Psoas muscle (tissue), 8 donors: ENCODE measurements at regions of chr10 and their contacts with region 1.

Region 1: DNA sequence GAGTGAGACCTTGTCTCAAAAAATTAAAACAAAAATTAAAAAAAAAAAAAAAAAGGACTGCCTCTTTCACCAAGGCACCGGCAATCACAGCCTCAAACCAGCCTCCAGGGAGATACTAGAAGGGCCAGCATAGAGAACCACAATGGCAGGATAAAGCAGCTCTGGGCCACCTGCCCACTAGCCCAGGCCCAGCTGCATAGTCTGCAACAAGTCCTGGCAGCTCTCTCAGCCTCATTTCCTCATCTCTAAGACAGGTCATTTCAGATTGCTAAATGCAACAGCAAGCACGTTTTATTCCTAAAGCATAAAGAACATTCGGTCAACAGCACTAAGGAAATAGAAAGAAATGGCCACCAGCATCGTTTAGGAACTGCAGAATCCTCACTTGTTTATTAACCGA is 28.8 kb downstream of the XPNPEP1 start:
- DNase-seq: peak; percentile 86 to 92
- ATAC-seq: peak; percentile 90 to 95 (median 92)
- H3K4me3 ChIP-seq: peak overlapping the region; percentile 14
- H3K27ac ChIP-seq: peak overlapping the region; percentile 68
- H3K4me1 ChIP-seq: peaks cover 41% of the 10 kb centered on the region
- H3K27me3 ChIP-seq: no peaks in the 10 kb centered on the region
- CTCF ChIP-seq: no peak

Region 2: GRCh38 chr10:109668154-109668665 is 226.3 kb before region 1 on chr10:
- intact Hi-C with region 1: no loop called
- DNase-seq: no peak
- ATAC-seq: no peak
- H3K4me3 ChIP-seq: no peak overlapping the region
- H3K27ac ChIP-seq: no peak overlapping the region
- H3K4me1 ChIP-seq: no peaks in the 10 kb centered on the region
- H3K27me3 ChIP-seq: no peaks in the 10 kb centered on the region
- CTCF ChIP-seq: no peak

Region 3: DNA sequence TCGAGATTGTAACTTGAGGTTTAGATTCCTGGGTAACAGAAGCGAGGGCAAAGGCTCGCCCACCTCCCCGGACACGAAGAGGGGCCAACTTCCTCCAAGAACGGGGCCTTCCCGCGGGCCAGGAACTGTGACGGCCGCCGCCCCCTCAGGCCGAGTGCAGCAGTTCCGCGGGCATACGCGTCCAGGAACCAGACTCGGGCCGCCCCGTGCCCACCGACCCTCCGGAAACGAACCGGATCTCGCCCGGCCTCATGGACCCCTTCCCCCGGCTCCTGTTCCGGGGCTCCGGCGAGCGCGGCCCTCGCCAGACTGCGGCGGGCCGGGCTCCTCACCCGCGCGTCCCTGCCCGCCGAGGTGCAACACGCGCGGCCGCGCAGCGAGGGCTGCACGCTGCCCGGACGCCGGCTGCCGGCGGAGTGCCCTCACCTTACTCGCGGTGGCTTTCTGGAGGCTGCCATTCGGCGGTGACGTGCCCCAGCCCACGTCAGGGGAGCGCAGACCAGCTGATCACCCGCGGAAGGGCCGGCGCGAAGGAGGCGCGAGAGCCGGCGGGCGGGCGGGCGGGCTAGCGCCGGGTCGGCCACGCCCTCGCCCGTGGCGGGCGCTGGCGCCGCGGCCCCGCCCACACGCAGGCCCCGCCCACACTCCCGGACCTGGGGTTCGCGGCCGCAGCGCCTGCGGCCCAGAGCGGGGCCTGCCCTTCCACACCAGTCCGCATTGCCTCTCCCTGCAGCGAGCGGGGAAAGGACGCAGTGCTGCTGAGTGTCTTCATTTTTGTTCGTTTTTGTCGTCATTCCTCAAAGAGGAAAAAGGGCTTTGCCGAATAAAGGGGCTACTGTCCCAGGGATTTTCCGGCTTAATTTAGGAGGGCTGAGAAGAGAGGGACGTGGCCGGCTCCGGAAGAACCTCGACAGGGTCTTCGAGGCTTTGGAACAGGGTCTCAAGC is 28.7 kb after region 1 on chr10 and contains the start of gene XPNPEP1:
- intact Hi-C with region 1: loop called (anchors 5 kb)
- DNase-seq: peak; percentile 90 to 94
- ATAC-seq: peak; percentile 98 to 99 (median 98)
- H3K4me3 ChIP-seq: peak within 1 kb of the TSS; percentile 95
- H3K27ac ChIP-seq: peak within 1 kb of the TSS; percentile 99
- H3K4me1 ChIP-seq: peaks cover 13% of the 10 kb centered on the region
- H3K27me3 ChIP-seq: no peaks in the 10 kb centered on the region
- CTCF ChIP-seq: no peak
- total RNA-seq, gene XPNPEP1: 34.9 to 62.3 (median 43.8) TPM

Region 4: DNA sequence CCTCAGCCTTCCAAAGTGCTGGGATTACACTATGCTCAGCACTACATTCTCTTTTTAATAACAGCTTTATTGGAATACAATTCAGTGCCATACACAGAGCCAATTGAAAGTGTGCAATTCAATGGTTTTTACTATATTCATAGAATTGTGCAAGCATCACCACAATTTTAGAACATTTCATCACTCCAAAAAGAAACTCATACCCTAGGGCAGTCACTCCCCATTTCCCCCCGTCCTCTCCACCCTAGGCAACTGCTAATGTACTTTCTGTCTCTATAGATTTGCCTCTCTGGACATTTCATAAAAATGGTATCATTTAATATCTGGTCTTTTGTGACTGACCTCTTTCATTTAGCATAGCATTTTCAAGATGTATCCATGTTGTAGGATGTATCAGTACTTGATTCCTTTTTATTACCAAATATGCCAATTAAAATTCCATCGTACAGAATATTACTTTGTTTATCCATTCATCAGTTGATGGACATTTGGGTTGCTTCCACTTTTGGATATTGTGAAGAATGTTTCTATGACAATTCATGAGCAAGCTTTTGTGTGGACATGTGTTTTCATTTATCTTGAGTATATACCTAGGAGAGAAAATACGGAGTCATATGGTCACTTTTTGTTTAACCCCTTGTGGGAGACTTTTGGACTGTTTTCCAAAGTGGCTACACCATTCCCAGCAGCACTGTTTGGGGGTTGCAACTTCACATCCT is 35.1 kb after region 1 on chr10:
- intact Hi-C with region 1: loop called (anchors 5 kb)
- DNase-seq: no peak
- ATAC-seq: no peak
- H3K4me3 ChIP-seq: no peak overlapping the region
- H3K27ac ChIP-seq: no peak overlapping the region
- H3K4me1 ChIP-seq: peaks cover 18% of the 10 kb centered on the region
- H3K27me3 ChIP-seq: no peaks in the 10 kb centered on the region
- CTCF ChIP-seq: no peak

Region 5: GRCh38 chr10:110535958-110536891 is 641.7 kb after region 1 on chr10:
- intact Hi-C with region 1: no loop called
- DNase-seq: no peak
- ATAC-seq: peak in 1 of 4 donors; percentile 37
- H3K4me3 ChIP-seq: no peak overlapping the region
- H3K27ac ChIP-seq: no peak overlapping the region
- H3K4me1 ChIP-seq: no peaks in the 10 kb centered on the region
- H3K27me3 ChIP-seq: peaks cover 0 to 21% (median 2%) of the 10 kb centered on the region in 3 donors
- CTCF ChIP-seq: peak; percentile 28